ENCODE measurements at regions of chr5 and their contacts with region 1.

Region 1: GRCh38 chr5:160021831-160022446 is 13.0 kb downstream of the TTC1 start:
- DNase-seq: no peak
- H3K4me3 ChIP-seq: no peak overlapping the region
- H3K27ac ChIP-seq: peak overlapping the region in 1 of 4 donors; percentile 1
- H3K4me1 ChIP-seq: peaks cover 0 to 23% (median 3%) of the 10 kb centered on the region in 3 donors
- H3K27me3 ChIP-seq: no peaks in the 10 kb centered on the region
- CTCF ChIP-seq: peak; percentile 45 to 87 (median 80)
- POLR2A ChIP-seq: no peak

Region 2: GRCh38 chr5:158976035-158976434 is 1045.9 kb before region 1 on chr5:
- intact Hi-C with region 1: no loop called
- DNase-seq: no peak
- H3K4me3 ChIP-seq: no peak overlapping the region
- H3K27ac ChIP-seq: peak overlapping the region in 1 of 4 donors; percentile 5
- H3K4me1 ChIP-seq: peaks cover 3 to 40% (median 7%) of the 10 kb centered on the region in 3 donors
- H3K27me3 ChIP-seq: no peaks in the 10 kb centered on the region
- CTCF ChIP-seq: no peak
- POLR2A ChIP-seq: no peak

Region 3: DNA sequence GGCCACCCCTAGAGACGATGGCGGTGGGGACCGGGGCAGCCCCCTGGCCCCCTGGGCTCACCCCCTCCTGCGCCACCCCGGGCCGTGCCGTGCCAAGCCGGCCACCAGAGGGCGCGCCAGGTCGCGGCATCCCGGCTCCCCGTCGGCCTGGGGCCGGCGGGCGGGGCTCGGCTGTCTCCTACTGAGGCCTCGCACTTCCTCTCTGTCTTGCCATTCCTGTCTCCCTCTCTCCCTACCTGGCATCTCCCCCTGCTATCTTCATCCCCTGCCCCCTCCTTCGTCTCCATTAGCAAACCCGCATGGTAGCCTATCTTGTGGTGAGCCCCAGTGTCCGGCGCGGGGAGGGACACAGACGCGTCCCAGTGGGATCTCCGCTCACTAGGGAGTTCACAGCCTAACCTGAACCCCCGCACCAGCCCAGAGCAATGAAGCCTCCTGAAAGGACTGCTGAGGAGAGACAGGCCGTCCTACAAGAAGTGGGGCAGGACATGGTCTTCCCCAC is 177.5 kb after region 1 on chr5:
- intact Hi-C with region 1: loop called (anchors 10 kb)
- DNase-seq: peak; percentile 12
- H3K4me3 ChIP-seq: peak overlapping the region; percentile 2 to 63 (median 45)
- H3K27ac ChIP-seq: peak overlapping the region in 1 of 4 donors; percentile 52
- H3K4me1 ChIP-seq: peaks cover 4 to 16% (median 9%) of the 10 kb centered on the region in 3 donors
- H3K27me3 ChIP-seq: no peaks in the 10 kb centered on the region
- CTCF ChIP-seq: peak; percentile 83 to 96 (median 94)
- POLR2A ChIP-seq: no peak